Endothelial cell of umbilical vein (primary cell): ENCODE measurements at regions of chr9 and their contacts with region 1.

Region 1: GRCh38 chr9:123102375-123103110 is 69.1 kb downstream of the GPR21 start:
- DNase-seq: peak; percentile 20
- H3K4me3 ChIP-seq: no peak overlapping the region
- H3K27ac ChIP-seq: no peak overlapping the region
- H3K4me1 ChIP-seq: no peaks in the 10 kb centered on the region
- H3K27me3 ChIP-seq: no peaks in the 10 kb centered on the region
- CTCF ChIP-seq: peak; percentile 6 to 18
- POLR2A ChIP-seq: no peak

Region 2: DNA sequence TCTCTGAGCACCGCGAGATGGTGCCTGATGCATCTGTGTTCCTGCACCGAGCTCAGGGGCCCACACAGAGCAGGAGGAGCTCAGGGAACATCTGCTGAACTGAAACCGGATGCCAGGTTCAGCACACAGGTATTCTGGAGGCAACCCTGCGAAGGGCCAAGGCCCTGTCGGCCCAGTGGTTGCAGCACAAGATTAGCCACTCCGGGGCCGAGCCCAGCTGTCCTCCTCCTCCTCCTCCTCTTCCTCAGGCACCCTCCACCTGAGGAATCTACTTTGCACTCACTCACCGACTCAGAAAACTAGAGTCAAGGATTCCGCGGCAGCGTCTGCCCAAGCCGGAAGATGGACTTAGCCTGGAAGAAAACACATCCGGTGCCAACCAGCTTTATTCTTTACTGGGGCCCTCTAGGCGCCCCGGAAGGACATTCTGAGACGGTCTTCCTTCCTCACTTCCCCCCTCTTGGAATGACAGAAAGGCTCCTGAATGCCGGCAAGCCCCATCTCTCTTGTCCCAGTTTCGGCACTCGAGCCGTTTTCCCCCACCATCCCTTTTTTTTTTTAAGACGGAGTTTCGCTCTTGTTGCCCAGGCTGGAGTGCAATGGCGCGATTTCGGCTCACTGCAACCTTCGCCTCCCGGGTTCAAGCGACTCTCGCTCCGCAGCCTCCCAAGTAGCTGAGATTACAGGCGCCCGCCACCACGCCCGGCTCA is 189.4 kb before region 1 on chr9 and contains the start of gene ZBTB6:
- CTCF ChIA-PET with region 1: no interaction called
- POLR2A ChIA-PET with region 1: no interaction called
- dilution Hi-C with region 1: no loop called
- intact Hi-C with region 1: no loop called
- DNase-seq: peak; percentile 77
- H3K4me3 ChIP-seq: peak within 1 kb of the TSS; percentile 78 to 99 (median 93)
- H3K27ac ChIP-seq: peak within 1 kb of the TSS; percentile 60
- H3K4me1 ChIP-seq: peaks cover 12% of the 10 kb centered on the region
- H3K27me3 ChIP-seq: no peaks in the 10 kb centered on the region
- CTCF ChIP-seq: no peak
- POLR2A ChIP-seq: peak; percentile 64
- total RNA-seq, gene ZBTB6: 5.5 and 6.5 TPM in 2 replicates

Region 3: DNA sequence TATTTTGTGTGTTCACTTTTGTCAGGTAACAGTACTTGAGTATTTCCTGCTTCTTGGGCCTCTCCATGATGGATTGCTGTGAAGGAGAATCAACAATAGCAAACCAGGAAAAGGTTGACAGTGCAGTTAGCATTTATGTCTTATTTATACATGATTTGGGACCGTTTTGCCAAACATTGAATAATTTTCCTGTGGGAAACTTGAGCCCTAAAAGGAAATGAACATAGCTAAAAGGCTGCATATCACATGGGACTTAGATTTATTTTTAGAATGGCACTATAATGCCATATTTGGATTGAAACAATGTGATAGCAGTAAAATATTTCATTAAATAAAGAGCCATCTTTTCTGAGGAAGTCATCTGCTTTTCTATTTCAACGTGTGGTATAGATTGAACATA is 53.8 kb before region 1 on chr9:
- CTCF ChIA-PET with region 1: no interaction called
- POLR2A ChIA-PET with region 1: no interaction called
- dilution Hi-C with region 1: no loop called
- intact Hi-C with region 1: no loop called
- DNase-seq: peak; percentile 96
- H3K4me3 ChIP-seq: no peak overlapping the region
- H3K27ac ChIP-seq: no peak overlapping the region
- H3K4me1 ChIP-seq: peaks cover 21% of the 10 kb centered on the region
- H3K27me3 ChIP-seq: no peaks in the 10 kb centered on the region
- CTCF ChIP-seq: no peak
- POLR2A ChIP-seq: no peak

Region 4: DNA sequence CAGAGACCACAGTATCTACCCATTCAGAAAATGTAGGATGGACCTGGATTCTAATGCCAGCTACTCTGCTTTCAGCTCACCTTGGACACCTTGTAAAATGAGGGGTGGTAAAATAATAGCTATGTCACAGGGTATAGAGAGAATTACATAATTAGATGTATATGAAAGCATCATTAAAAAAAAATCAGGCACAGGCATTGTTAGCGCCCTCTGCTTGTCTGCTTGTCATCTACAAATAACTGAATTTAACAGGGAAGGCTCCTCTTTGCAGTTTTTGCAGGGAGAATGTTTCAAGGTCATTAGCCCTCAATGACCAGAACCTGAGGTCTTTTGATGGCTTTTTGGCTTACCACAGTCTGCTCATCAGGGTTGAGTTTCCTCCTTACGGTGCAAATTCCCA is 11.1 kb before region 1 on chr9:
- CTCF ChIA-PET with region 1: interaction called, 12 read pairs
- POLR2A ChIA-PET with region 1: no interaction called
- dilution Hi-C with region 1: no loop called
- intact Hi-C with region 1: no loop called
- DNase-seq: no peak
- H3K4me3 ChIP-seq: no peak overlapping the region
- H3K27ac ChIP-seq: no peak overlapping the region
- H3K4me1 ChIP-seq: no peaks in the 10 kb centered on the region
- H3K27me3 ChIP-seq: no peaks in the 10 kb centered on the region
- CTCF ChIP-seq: peak in 1 of 2 donors; percentile 24
- POLR2A ChIP-seq: no peak

Region 5: DNA sequence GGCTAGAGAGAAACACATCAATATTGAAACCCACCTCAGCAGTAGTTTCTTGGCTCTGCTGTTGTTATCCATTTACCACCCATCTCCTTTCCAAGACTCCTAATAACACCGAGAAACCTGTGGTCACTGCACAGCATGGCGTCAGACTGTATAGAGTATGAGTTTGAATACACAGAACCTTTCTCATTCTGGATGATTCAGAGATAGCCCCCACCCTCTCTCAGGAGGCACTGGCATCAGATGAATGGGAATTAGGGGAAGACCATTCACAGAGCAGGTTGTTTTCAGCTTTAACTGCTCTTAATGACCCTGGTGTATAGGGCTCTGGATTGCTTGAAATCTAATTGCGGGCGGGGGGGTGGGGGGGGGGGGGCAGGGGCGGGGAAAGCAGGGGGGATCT is 17.6 kb after region 1 on chr9:
- CTCF ChIA-PET with region 1: interaction called, 3 read pairs
- POLR2A ChIA-PET with region 1: no interaction called
- dilution Hi-C with region 1: no loop called
- intact Hi-C with region 1: loop called (anchors 2 kb)
- DNase-seq: no peak
- H3K4me3 ChIP-seq: no peak overlapping the region
- H3K27ac ChIP-seq: no peak overlapping the region
- H3K4me1 ChIP-seq: no peaks in the 10 kb centered on the region
- H3K27me3 ChIP-seq: no peaks in the 10 kb centered on the region
- CTCF ChIP-seq: no peak
- POLR2A ChIP-seq: no peak

Region 6: GRCh38 chr9:123217148-123217585 is 114.6 kb after region 1 on chr9:
- CTCF ChIA-PET with region 1: interaction called, 15 read pairs
- POLR2A ChIA-PET with region 1: no interaction called
- dilution Hi-C with region 1: no loop called
- intact Hi-C with region 1: no loop called
- DNase-seq: peak; percentile 69
- H3K4me3 ChIP-seq: peak overlapping the region in 1 of 3 experiments; percentile 21
- H3K27ac ChIP-seq: no peak overlapping the region
- H3K4me1 ChIP-seq: peaks cover 17% of the 10 kb centered on the region
- H3K27me3 ChIP-seq: no peaks in the 10 kb centered on the region
- CTCF ChIP-seq: no peak
- POLR2A ChIP-seq: no peak

Region 7: DNA sequence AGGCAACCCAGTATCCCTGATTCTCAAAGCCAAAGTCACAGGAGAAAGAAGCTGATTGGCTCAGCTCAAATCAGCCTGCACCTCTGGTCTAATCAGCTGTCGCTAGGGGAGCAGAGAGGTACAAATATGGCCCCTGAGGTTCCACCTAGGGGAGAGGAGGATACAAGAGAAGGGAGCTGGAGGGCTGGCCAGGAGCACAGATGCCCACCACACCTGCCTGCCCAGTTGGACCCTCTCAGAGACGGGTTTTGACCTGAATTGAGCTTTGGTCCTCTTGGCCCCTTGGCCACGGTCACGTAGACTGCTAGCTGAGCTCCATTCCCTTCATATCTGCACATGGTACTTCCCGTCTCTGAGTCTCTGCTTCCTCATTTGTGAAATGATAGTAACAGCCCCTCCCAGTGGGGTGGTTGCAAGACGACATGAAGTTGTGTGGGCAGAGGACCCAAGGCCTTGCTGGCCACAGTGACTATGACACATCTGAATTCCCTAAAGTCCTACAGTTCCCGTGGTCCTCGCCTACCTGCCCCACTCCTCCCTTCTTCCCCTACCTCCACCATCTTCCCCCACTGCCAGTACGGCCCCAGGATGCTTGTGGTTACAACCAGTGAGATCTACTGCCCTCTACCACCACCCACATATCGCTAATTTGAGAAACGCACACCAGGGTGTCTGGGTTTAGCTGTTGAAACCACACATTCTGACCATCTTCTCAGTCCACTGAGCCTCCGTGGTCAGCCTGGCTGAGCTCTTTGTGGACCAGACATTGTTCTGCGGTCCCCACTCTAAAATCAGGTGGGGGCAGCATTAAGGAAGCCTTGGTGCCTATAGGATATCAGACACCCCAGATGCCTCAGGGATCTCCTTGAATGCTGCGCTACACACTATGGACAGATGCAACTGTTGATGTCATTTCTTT is 1094.9 kb after region 1 on chr9:
- CTCF ChIA-PET with region 1: no interaction called
- POLR2A ChIA-PET with region 1: no interaction called
- dilution Hi-C with region 1: no loop called
- intact Hi-C with region 1: no loop called
- DNase-seq: no peak
- H3K4me3 ChIP-seq: no peak overlapping the region
- H3K27ac ChIP-seq: no peak overlapping the region
- H3K4me1 ChIP-seq: peaks cover 2% of the 10 kb centered on the region
- H3K27me3 ChIP-seq: peaks cover 0 to 2% of the 10 kb centered on the region in 2 experiments
- CTCF ChIP-seq: no peak
- POLR2A ChIP-seq: no peak